ENCODE measurements at regions of chr7 and their contacts with region 1.

Region 1: GRCh38 chr7:33109005-33109757 is at the start of gene RP9:
- DNase-seq: peak; percentile 78
- ATAC-seq: peak; percentile 94
- H3K4me3 Mint-ChIP-seq: peak within 1 kb of the TSS; percentile 87
- H3K27ac Mint-ChIP-seq: peak within 1 kb of the TSS; percentile 66
- H3K4me1 Mint-ChIP-seq: peaks cover 29% of the 10 kb centered on the region
- H3K27me3 Mint-ChIP-seq: peaks cover 19% of the 10 kb centered on the region
- total RNA-seq, gene RP9: 9.6 to 11.8 TPM

Region 2: GRCh38 chr7:32765185-32765584 is 344.0 kb before region 1 on chr7:
- CTCF ChIA-PET with region 1: interaction called, 11 read pairs
- POLR2A ChIA-PET with region 1: no interaction called
- DNase-seq: no peak
- ATAC-seq: no peak
- H3K4me3 Mint-ChIP-seq: no peak overlapping the region
- H3K27ac Mint-ChIP-seq: no peak overlapping the region
- H3K4me1 Mint-ChIP-seq: peaks cover 9% of the 10 kb centered on the region
- H3K27me3 Mint-ChIP-seq: peaks cover 53% of the 10 kb centered on the region

Region 3: GRCh38 chr7:32846701-32847100 is 262.5 kb before region 1 on chr7:
- CTCF ChIA-PET with region 1: interaction called, 80 read pairs
- POLR2A ChIA-PET with region 1: interaction called, 4 read pairs
- DNase-seq: peak; percentile 93
- ATAC-seq: peak; percentile 100
- H3K4me3 Mint-ChIP-seq: peak overlapping the region; percentile 31
- H3K27ac Mint-ChIP-seq: no peak overlapping the region
- H3K4me1 Mint-ChIP-seq: peaks cover 10% of the 10 kb centered on the region
- H3K27me3 Mint-ChIP-seq: peaks cover 31% of the 10 kb centered on the region

Region 4: GRCh38 chr7:33040803-33041516 is 68.2 kb before region 1 on chr7:
- CTCF ChIA-PET with region 1: interaction called, 31 read pairs
- POLR2A ChIA-PET with region 1: interaction called, 14 read pairs
- DNase-seq: peak; percentile 84
- ATAC-seq: peak; percentile 98
- H3K4me3 Mint-ChIP-seq: peak overlapping the region; percentile 78
- H3K27ac Mint-ChIP-seq: peak overlapping the region; percentile 73
- H3K4me1 Mint-ChIP-seq: peaks cover 43% of the 10 kb centered on the region
- H3K27me3 Mint-ChIP-seq: no peaks in the 10 kb centered on the region

Region 5: GRCh38 chr7:33062782-33063443 is 46.3 kb before region 1 on chr7:
- CTCF ChIA-PET with region 1: interaction called, 22 read pairs
- POLR2A ChIA-PET with region 1: interaction called, 9 read pairs
- DNase-seq: peak; percentile 93
- ATAC-seq: peak; percentile 95
- H3K4me3 Mint-ChIP-seq: peak overlapping the region; percentile 93
- H3K27ac Mint-ChIP-seq: peak overlapping the region; percentile 94
- H3K4me1 Mint-ChIP-seq: peaks cover 35% of the 10 kb centered on the region
- H3K27me3 Mint-ChIP-seq: peaks cover 8% of the 10 kb centered on the region

Region 6: DNA sequence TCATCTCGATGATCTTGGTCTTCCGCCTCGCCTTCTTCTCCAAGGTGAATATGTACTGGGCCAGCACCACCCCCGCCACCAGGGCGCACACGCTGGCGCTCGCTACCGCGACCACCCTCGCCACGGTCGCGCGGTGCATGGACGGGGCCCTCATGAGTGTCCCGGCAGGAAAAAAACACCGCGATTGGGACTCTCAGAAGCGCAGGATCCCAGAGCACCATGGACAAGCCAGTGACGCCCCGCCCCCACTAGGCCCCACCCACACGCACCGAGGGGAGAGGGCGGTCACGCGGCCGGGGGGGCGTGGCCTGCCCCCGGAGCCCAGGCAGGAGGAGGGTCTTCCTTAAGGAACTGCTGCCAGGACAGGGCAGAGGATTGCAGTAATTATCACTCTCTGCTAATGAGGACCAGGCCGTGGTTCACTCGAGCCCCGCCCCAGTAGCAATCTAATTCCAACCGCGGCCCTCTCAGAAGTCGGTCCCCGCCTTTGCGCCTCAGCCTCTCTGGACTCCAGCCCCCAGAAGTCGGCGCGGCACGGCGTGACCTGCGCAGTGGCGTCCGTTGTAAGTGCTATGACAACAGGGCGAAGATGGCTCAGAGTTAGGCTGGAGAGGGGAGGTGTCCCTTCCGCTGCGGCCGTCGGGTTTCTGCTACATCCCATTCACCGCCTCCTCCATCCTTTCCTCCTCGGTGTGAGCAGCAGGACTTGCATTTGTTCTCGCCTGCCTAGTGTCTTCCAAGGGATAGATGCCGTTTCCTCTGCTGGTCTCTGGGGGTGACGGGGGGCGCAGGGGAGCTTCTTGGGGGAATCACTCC is 20.0 kb after region 1 on chr7 and contains the start of gene BBS9:
- CTCF ChIA-PET with region 1: interaction called, 29 read pairs
- POLR2A ChIA-PET with region 1: interaction called, 4 read pairs
- DNase-seq: peak; percentile 95
- ATAC-seq: peak; percentile 99
- H3K4me3 Mint-ChIP-seq: peak within 1 kb of the TSS; percentile 96
- H3K27ac Mint-ChIP-seq: peak within 1 kb of the TSS; percentile 86
- H3K4me1 Mint-ChIP-seq: peaks cover 21% of the 10 kb centered on the region
- H3K27me3 Mint-ChIP-seq: peaks cover 2% of the 10 kb centered on the region
- total RNA-seq, gene BBS9: 7.9 to 11.8 TPM

Region 7: GRCh38 chr7:33201821-33202220 is 92.6 kb after region 1 on chr7:
- CTCF ChIA-PET with region 1: no interaction called
- POLR2A ChIA-PET with region 1: no interaction called
- DNase-seq: no peak
- ATAC-seq: no peak
- H3K4me3 Mint-ChIP-seq: no peak overlapping the region
- H3K27ac Mint-ChIP-seq: no peak overlapping the region
- H3K4me1 Mint-ChIP-seq: peaks cover 3% of the 10 kb centered on the region
- H3K27me3 Mint-ChIP-seq: no peaks in the 10 kb centered on the region

Measured in activated CD8-positive, alpha-beta T cell treated with anti-CD3 and anti-CD28 coated beads, Interleukin-2, amount 10 ng/mL, durations not matched to agents 7 days and 5 days (primary cell).